Activated naive CD4-positive, alpha-beta T cell treated with anti-CD3 and anti-CD28 coated beads for 36 hours (primary cell): ENCODE measurements at regions of chr22 and their contacts with region 1.

Region 1: DNA sequence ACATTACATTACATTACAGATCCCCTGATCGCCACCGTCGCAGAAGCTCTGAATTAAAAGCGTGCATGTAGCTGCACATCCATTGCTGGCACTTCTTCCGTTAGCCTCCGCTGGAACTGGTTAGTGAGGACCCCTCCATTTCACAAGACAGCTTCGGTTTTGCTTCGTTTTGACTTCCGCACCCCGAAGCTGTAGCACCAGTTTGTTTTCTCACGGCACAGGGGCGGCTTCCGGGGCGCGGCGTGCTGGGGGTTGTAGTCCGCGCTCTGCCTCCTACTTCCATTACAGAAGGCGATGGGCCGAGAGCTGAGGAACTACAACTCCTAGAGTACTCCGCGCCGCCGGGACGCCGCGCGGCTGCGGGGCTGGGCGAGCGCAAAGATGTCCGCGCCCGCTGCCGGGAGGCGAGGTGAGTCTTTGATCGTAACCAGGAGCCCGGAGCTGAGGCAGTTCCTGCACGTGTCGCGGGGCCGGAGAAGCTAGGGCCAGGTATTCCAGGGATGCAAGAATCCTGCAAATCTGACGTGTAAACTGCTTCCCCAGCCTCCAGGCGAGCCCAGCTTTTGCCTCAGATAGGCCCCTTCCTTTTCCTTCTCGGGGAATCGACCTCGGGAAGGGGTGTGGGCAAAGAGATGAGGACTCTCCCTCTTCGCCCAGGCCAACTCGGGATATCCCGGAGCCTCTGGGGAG is at the start of gene PEX26:
- DNase-seq: peak; percentile 97
- H3K4me3 Mint-ChIP-seq: peak within 1 kb of the TSS; percentile 99
- H3K27ac Mint-ChIP-seq: peak within 1 kb of the TSS; percentile 99
- H3K4me1 Mint-ChIP-seq: peaks cover 47% of the 10 kb centered on the region
- H3K27me3 Mint-ChIP-seq: no peaks in the 10 kb centered on the region
- total RNA-seq, gene PEX26: 47.6 to 48.2 TPM

Region 2: DNA sequence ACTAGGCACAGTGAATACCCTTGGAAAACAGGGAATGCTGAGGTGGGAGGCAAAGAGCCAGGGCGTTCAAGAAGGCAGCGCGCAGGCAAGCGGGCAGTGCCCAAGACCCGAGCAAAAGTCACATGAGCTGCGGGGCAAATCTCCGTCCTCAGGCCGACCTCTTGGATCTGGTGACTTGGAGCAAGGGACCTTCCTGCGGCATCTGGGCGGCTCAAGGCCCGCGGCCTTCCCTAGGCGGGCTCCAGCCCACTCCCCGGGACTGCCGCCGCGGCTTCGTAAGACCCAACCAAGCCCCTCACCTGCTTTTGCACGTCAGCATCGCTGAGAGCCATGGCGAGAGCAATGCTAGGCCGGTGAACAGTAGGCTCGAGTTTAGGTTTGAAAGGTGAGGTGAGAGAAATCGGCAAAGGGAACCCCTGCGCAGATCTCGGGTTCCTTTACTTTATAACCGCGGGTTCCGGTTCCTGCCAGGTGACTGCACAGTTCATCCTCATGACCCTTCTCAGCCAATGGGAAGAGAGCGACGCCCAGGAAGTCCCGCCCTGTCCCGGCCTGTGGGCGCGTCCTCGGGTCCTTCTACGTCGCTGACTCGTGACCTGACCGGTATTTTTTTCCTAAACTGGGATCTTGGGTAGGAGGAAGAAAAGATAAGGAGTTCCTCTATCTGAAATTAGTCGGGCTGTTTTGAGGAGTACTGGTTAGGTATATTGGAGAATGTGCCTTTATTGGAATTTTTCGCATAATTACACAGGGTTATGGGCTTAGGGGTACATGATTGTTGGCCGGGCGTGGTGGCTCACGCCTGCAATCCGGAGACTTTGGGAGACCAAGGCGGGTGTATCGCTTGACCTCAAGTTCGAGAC is 449.2 kb before region 1 on chr22 and contains the start of gene ATP6V1E1:
- CTCF ChIA-PET with region 1: no interaction called
- intact Hi-C with region 1: loop called (anchors 2 kb)
- DNase-seq: peak; percentile 98
- H3K4me3 Mint-ChIP-seq: peak within 1 kb of the TSS; percentile 98
- H3K27ac Mint-ChIP-seq: peak within 1 kb of the TSS; percentile 92
- H3K4me1 Mint-ChIP-seq: peaks cover 26% of the 10 kb centered on the region
- H3K27me3 Mint-ChIP-seq: no peaks in the 10 kb centered on the region
- total RNA-seq, gene ATP6V1E1: 74.5 to 75.5 TPM

Region 3: GRCh38 chr22:17773606-17774205 is 304.1 kb before region 1 on chr22:
- CTCF ChIA-PET with region 1: interaction called, 9 read pairs
- intact Hi-C with region 1: loop called (anchors 1 kb)
- DNase-seq: peak; percentile 79
- H3K4me3 Mint-ChIP-seq: peak overlapping the region; percentile 82
- H3K27ac Mint-ChIP-seq: peak overlapping the region; percentile 66
- H3K4me1 Mint-ChIP-seq: peaks cover 76% of the 10 kb centered on the region
- H3K27me3 Mint-ChIP-seq: no peaks in the 10 kb centered on the region

Region 4: GRCh38 chr22:18024276-18024947 is 53.4 kb before region 1 on chr22 and contains the start of gene MICAL3:
- CTCF ChIA-PET with region 1: interaction called, 9 read pairs
- intact Hi-C with region 1: loop called (anchors 5 kb)
- DNase-seq: peak; percentile 63
- H3K4me3 Mint-ChIP-seq: peak within 1 kb of the TSS; percentile 84
- H3K27ac Mint-ChIP-seq: no peak within 1 kb of the TSS
- H3K4me1 Mint-ChIP-seq: peaks cover 10% of the 10 kb centered on the region
- H3K27me3 Mint-ChIP-seq: peaks cover 27% of the 10 kb centered on the region
- total RNA-seq, gene MICAL3: 21.0 to 25.8 TPM

Region 5: GRCh38 chr22:18044548-18045271 is 33.1 kb before region 1 on chr22:
- CTCF ChIA-PET with region 1: no interaction called
- intact Hi-C with region 1: no loop called
- DNase-seq: no peak
- H3K4me3 Mint-ChIP-seq: no peak overlapping the region
- H3K27ac Mint-ChIP-seq: no peak overlapping the region
- H3K4me1 Mint-ChIP-seq: no peaks in the 10 kb centered on the region
- H3K27me3 Mint-ChIP-seq: peaks cover 2% of the 10 kb centered on the region

Region 6: GRCh38 chr22:18104566-18104965 is 26.8 kb after region 1 on chr22:
- CTCF ChIA-PET with region 1: interaction called, 3 read pairs
- intact Hi-C with region 1: loop called (anchors 1 kb)
- DNase-seq: no peak
- H3K4me3 Mint-ChIP-seq: no peak overlapping the region
- H3K27ac Mint-ChIP-seq: no peak overlapping the region
- H3K4me1 Mint-ChIP-seq: peaks cover 29% of the 10 kb centered on the region
- H3K27me3 Mint-ChIP-seq: peaks cover 9% of the 10 kb centered on the region